MCF 10A (cell line): ENCODE measurements at regions of chr12 and their contacts with region 1.

Region 1: GRCh38 chr12:46364777-46365580 is 7.6 kb downstream of the SLC38A2 start:
- DNase-seq: peak; percentile 85
- H3K4me3 Mint-ChIP-seq: peak overlapping the region; percentile 93
- H3K27ac Mint-ChIP-seq: no peak overlapping the region
- H3K4me1 Mint-ChIP-seq: peaks cover 24% of the 10 kb centered on the region
- H3K27me3 Mint-ChIP-seq: no peaks in the 10 kb centered on the region
- CTCF ChIP-seq: no peak

Region 2: DNA sequence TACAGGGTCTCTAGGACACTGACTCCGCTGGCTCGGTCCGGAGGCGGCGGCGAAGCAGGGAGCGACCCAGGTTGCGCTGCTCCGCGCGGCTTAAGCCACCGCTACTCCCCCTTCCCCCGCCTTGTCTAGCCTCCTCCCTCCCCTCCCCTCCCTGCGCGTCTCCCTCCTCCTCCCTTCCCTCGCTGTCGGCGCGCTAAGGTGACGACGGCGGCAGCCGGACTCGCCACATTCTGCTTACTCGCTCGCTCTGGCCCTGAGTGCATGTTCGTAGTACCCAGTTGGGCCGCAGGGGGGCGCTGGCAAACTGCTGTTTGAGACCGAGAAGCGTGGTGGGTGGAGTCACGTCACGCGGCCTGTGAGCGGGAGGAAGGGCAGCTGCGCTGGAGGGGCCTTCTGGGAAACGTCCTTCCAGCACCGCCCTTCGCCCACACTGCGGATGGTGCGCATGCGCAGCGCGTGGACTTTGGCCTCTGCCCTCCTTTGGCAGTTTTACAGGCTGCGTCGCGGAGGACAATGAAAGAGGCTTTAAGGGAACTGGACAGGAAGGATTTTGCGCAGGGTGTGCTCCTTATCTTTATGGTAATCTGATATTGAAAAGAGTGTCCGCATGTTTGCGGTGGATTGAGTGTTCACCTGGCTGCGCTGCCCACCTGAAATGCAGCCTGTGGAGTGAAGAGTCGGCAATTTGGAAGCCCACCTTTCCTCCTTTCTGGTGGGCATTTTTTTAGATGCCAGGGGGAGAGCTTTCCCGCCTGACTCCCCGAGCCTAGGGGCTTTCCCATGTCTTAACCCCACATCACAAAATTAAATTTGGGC is 374.3 kb before region 1 on chr12 and contains the start of gene SCAF11:
- CTCF ChIA-PET with region 1: no interaction called
- POLR2A ChIA-PET with region 1: interaction called, 15 read pairs
- intact Hi-C with region 1: loop called (anchors 5 kb)
- DNase-seq: peak; percentile 99
- H3K4me3 Mint-ChIP-seq: peak within 1 kb of the TSS; percentile 91
- H3K27ac Mint-ChIP-seq: peak within 1 kb of the TSS; percentile 93
- H3K4me1 Mint-ChIP-seq: peaks cover 31% of the 10 kb centered on the region
- H3K27me3 Mint-ChIP-seq: no peaks in the 10 kb centered on the region
- CTCF ChIP-seq: peak; percentile 85
- total RNA-seq, gene SCAF11: 106 and 107 TPM in 2 replicates

Region 3: DNA sequence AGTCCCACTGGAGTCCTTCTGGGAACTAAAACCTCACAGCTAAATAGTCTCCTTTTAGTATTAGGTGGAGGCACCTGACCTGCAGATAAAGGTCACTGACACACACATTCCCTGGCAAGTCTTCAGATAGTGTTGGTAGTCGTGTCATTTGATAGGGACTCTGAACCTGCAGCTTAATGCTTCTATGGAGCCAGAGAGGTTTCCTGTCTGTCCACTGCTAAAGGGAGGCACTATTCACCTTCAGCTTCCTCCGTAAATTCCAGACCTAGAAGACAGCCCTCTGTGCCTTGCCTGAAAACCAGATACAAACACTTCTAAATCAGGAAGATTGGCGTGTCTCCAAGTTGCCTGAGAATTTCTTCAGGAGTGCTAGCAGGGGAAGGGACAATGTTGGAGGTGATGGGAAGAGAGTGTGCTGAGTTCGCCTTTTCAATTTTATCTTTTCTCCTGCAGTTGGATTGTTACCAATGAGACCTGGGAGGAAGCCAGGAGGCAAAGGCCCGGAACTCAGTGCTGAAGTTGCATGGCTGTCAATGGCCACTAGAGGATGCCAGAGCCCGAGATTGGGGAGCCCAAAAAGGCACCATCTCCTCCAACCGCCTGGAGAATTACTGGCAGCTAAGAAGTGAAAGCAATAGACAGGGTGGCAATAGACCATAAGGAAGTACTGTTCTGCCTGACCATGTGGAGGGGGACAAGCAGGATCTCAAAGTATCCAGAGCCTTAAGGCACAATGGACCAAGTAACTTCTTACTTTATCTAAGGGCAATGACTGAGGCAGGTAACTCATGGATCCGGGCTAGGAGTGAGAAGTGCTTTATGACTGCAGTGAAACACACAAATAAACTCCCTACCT is 293.0 kb before region 1 on chr12:
- CTCF ChIA-PET with region 1: interaction called, 5 read pairs
- POLR2A ChIA-PET with region 1: no interaction called
- intact Hi-C with region 1: loop called (anchors 2 kb)
- DNase-seq: peak; percentile 87
- H3K4me3 Mint-ChIP-seq: no peak overlapping the region
- H3K27ac Mint-ChIP-seq: peak overlapping the region; percentile 47
- H3K4me1 Mint-ChIP-seq: peaks cover 20% of the 10 kb centered on the region
- H3K27me3 Mint-ChIP-seq: no peaks in the 10 kb centered on the region
- CTCF ChIP-seq: peak; percentile 95

Region 4: GRCh38 chr12:46260151-46260918 is 104.6 kb before region 1 on chr12:
- CTCF ChIA-PET with region 1: interaction called, 3 read pairs
- POLR2A ChIA-PET with region 1: interaction called, 26 read pairs
- intact Hi-C with region 1: no loop called
- DNase-seq: no peak
- H3K4me3 Mint-ChIP-seq: no peak overlapping the region
- H3K27ac Mint-ChIP-seq: no peak overlapping the region
- H3K4me1 Mint-ChIP-seq: peaks cover 14% of the 10 kb centered on the region
- H3K27me3 Mint-ChIP-seq: no peaks in the 10 kb centered on the region
- CTCF ChIP-seq: no peak